Activated T-helper 1 cell treated with anti-CD3 and anti-CD28 coated beads, Interleukin-12 subunit alpha, Interleukin-12 subunit beta, Interleukin-2, Interleukin-4 antibody, amounts not matched to agents 30 ng/mL and 10 ng/mL and 1 ng/mL, durations not matched to agents 14 hours and 24 hours and 36 hours (primary cell): ENCODE measurements at regions of chr10 and their contacts with region 1.

Region 1: GRCh38 chr10:113385021-113385999 is 167.5 kb upstream of the HABP2 start:
- DNase-seq: peak; percentile 4
- H3K4me3 Mint-ChIP-seq: no peak overlapping the region
- H3K27ac Mint-ChIP-seq: no peak overlapping the region
- H3K4me1 Mint-ChIP-seq: peaks cover 14% of the 10 kb centered on the region
- H3K27me3 Mint-ChIP-seq: peaks cover 32% of the 10 kb centered on the region

Region 2: GRCh38 chr10:112332509-112333228 is 1052.6 kb before region 1 on chr10:
- intact Hi-C with region 1: loop called (anchors 10 kb)
- DNase-seq: no peak
- H3K4me3 Mint-ChIP-seq: no peak overlapping the region
- H3K27ac Mint-ChIP-seq: no peak overlapping the region
- H3K4me1 Mint-ChIP-seq: no peaks in the 10 kb centered on the region
- H3K27me3 Mint-ChIP-seq: no peaks in the 10 kb centered on the region

Region 3: GRCh38 chr10:112721080-112721698 is 664.1 kb before region 1 on chr10:
- intact Hi-C with region 1: loop called (anchors 2 kb)
- DNase-seq: no peak
- H3K4me3 Mint-ChIP-seq: no peak overlapping the region
- H3K27ac Mint-ChIP-seq: no peak overlapping the region
- H3K4me1 Mint-ChIP-seq: no peaks in the 10 kb centered on the region
- H3K27me3 Mint-ChIP-seq: no peaks in the 10 kb centered on the region

Region 4: GRCh38 chr10:113126229-113127201 is 258.8 kb before region 1 on chr10:
- intact Hi-C with region 1: loop called (anchors 10 kb)
- DNase-seq: no peak
- H3K4me3 Mint-ChIP-seq: no peak overlapping the region
- H3K27ac Mint-ChIP-seq: no peak overlapping the region
- H3K4me1 Mint-ChIP-seq: no peaks in the 10 kb centered on the region
- H3K27me3 Mint-ChIP-seq: peaks cover 35% of the 10 kb centered on the region

Region 5: DNA sequence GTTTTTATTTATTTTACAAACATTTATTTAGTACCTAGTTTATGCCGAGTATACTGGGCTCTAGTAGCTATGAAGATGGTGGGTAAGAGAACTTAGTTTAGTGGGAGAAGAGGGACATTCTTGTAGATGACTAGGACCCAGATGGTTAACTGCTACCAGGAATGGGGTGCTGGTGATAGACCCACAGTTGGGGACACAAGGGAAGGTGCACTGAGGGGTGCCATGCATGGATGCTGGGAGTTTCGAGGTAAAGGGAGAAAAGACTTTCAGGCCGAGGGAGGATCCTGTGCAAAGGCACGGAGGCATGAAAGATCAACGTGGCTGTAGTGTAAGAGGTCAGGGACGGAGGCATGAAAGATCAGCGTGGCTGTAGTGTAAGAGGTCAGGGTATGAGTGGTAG is 36.6 kb before region 1 on chr10:
- intact Hi-C with region 1: loop called (anchors 1 kb)
- DNase-seq: no peak
- H3K4me3 Mint-ChIP-seq: no peak overlapping the region
- H3K27ac Mint-ChIP-seq: no peak overlapping the region
- H3K4me1 Mint-ChIP-seq: no peaks in the 10 kb centered on the region
- H3K27me3 Mint-ChIP-seq: peaks cover 2% of the 10 kb centered on the region